ENCODE measurements at regions of chr21 and their contacts with region 1.

Region 1: DNA sequence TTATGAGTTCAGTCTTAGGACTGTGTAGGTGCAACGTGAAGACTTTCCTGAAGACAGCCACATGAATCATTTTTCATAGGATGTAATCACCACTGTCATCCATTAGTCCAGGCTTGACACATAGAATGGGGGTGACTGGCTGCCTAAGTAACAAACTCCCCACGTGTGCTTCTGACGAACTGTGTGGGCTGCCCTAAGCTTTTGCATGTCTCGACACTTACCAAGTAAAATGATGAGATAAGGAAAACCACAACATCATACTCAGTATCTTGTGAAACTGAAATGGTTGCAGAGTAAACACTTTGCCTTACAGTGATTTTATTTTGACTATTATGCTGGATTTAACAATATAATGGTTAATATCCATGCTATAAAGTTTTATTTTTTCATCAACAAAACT is 19.5 kb downstream of the ERG start:
- DNase-seq: no peak
- H3K4me3 ChIP-seq: no peak overlapping the region
- H3K27ac ChIP-seq: peak overlapping the region; percentile 99
- H3K4me1 ChIP-seq: peaks cover 94% of the 10 kb centered on the region
- H3K27me3 ChIP-seq: no peaks in the 10 kb centered on the region
- CTCF ChIP-seq: no peak
- POLR2A ChIP-seq: no peak

Region 2: DNA sequence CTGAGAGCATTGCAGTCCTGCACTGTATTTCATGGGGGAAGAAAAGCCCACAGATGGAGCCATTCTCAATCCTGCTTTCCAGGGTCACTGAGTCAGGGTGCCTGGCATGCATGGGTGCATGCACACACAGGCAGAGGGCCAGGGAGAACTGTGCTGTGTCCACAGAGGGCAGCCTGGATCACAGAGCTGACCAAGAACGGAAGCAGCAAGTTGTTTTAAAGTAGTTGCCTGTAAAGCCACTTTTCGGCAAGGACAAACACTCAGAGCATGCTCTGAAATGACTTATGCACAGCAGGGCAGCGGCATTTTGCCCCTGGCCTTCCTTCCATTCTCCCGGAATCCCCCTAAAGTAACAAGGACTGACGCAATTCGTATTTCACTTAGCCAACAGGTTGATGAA is 15.9 kb after region 1 on chr21:
- CTCF ChIA-PET with region 1: interaction called, 12 read pairs
- POLR2A ChIA-PET with region 1: interaction called, 5 read pairs
- dilution Hi-C with region 1: no loop called
- intact Hi-C with region 1: loop called (anchors 1 kb)
- DNase-seq: peak; percentile 88
- H3K4me3 ChIP-seq: peak overlapping the region; percentile 84 to 100 (median 99)
- H3K27ac ChIP-seq: peak overlapping the region; percentile 100
- H3K4me1 ChIP-seq: peaks cover 63% of the 10 kb centered on the region
- H3K27me3 ChIP-seq: no peaks in the 10 kb centered on the region
- CTCF ChIP-seq: no peak
- POLR2A ChIP-seq: peak; percentile 86

Measured in endothelial cell of umbilical vein (primary cell).